ENCODE measurements at regions of chrX and their contacts with region 1.

Region 1: GRCh38 chrX:119516157-119516702 is 48.0 kb downstream of the SLC25A5 start:
- DNase-seq: peak; percentile 45
- H3K4me3 Mint-ChIP-seq: no peak overlapping the region
- H3K27ac Mint-ChIP-seq: no peak overlapping the region
- H3K4me1 Mint-ChIP-seq: no peaks in the 10 kb centered on the region
- H3K27me3 Mint-ChIP-seq: no peaks in the 10 kb centered on the region

Region 2: GRCh38 chrX:119488749-119489148 is 27.5 kb before region 1 on chrX:
- CTCF ChIA-PET with region 1: interaction called, 7 read pairs
- intact Hi-C with region 1: loop called (anchors 1 kb)
- DNase-seq: peak; percentile 60
- H3K4me3 Mint-ChIP-seq: no peak overlapping the region
- H3K27ac Mint-ChIP-seq: no peak overlapping the region
- H3K4me1 Mint-ChIP-seq: no peaks in the 10 kb centered on the region
- H3K27me3 Mint-ChIP-seq: no peaks in the 10 kb centered on the region

Region 3: DNA sequence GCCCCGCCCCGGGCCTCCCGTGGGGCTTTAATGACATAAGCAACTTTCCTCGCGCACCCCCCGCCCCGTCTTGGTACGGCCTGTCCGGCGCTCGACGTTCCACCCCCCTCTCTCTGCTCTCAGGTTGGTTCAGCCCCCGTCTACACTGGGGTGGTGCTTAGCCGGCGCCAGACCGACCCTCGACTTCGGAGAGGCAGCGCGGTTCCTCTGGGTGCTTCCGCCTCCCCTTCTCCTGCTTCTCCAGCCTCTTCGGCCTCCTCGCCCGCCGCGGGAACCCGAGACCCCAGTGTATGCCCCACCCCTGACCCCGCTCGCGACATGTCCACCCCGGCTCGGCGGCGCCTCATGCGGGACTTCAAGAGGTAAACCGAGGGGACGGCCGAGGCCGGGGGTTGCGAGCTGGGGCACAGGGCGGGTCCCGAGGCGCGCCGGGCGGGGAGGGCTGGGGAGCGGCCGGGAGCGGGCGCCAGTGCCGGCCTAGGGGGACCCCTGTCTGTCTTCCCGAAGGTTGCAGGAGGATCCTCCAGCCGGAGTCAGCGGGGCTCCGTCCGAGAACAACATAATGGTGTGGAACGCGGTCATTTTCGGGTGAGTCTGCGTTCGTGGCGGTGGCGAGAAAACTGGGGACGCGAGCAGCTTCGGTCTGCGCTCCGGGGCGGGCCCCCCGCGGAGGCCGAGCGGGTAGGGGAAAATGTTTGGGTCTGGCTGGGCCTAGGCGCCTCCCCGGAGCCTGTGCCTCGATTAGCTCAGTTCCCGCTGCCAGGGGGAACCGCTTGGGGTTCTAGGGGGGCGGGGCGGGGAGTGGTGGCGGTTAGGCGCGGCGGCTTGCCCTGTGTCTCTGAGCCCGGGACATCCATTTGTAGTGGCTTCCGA is 58.4 kb after region 1 on chrX and contains the start of gene UBE2A:
- CTCF ChIA-PET with region 1: no interaction called
- intact Hi-C with region 1: loop called (anchors 2 kb)
- DNase-seq: peak; percentile 89
- H3K4me3 Mint-ChIP-seq: peak within 1 kb of the TSS; percentile 91
- H3K27ac Mint-ChIP-seq: peak within 1 kb of the TSS; percentile 89
- H3K4me1 Mint-ChIP-seq: peaks cover 12% of the 10 kb centered on the region
- H3K27me3 Mint-ChIP-seq: no peaks in the 10 kb centered on the region
- total RNA-seq, gene UBE2A: 46.1 to 49.8 TPM

Region 4: DNA sequence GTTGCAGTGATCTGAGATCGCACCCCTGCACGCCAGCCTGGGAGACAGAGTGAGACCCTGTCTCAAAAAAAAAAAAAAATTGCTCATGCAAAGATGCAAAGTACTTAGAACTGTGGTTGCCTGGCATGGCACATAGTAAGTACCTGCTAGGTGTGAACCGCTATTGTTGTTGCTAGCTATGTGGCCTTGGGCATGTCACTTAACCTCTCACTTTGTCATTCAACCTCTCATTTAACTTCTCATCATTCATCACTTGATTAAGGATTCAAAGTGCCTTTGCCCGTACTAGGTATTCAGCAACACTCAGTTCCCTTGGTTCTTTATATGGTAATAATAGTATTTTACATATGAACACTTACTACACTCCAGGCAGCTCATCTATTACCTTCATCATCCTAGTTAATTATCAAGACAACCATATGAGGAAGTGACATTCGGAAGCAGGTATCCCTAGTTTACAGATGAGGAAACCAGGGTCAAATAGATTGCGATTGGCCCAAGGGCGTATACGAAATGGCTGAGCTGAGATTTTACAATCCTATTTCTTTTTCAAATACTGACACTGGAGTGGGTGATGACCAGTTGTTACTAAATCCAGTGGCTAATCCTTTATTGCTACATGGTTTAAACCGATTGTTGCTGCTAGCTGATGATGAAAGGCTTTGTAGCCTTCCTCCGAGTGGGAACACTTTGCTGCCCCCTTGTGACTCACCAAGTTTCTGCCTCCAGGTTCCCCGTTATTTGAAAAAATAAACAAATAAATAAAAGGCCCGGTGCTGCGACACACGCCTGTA is 213.4 kb after region 1 on chrX:
- CTCF ChIA-PET with region 1: interaction called, 37 read pairs
- intact Hi-C with region 1: loop called (anchors 1 kb)
- DNase-seq: peak; percentile 81
- H3K4me3 Mint-ChIP-seq: no peak overlapping the region
- H3K27ac Mint-ChIP-seq: no peak overlapping the region
- H3K4me1 Mint-ChIP-seq: peaks cover 6% of the 10 kb centered on the region
- H3K27me3 Mint-ChIP-seq: no peaks in the 10 kb centered on the region

Region 5: DNA sequence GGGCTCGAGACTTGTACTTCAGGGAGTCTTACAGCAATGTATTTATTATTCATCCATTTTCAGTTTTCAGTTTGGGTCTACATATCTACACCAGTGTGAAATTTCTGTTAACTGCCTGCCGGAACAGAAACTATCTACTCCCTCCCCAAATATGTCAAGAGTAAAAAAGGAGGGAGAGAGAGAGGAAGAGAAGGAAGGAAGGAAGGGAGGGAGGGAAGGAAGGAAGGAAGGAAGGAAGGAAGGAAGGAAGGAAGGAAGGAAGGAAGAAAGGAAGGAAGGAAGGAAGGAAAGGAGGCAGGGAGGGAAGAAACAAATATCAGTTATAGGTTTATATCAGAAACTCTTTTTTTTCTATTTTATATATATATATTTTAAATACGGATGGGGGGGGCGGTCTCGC is 262.6 kb after region 1 on chrX:
- CTCF ChIA-PET with region 1: no interaction called
- intact Hi-C with region 1: loop called (anchors 1 kb)
- DNase-seq: no peak
- H3K4me3 Mint-ChIP-seq: no peak overlapping the region
- H3K27ac Mint-ChIP-seq: no peak overlapping the region
- H3K4me1 Mint-ChIP-seq: peaks cover 6% of the 10 kb centered on the region
- H3K27me3 Mint-ChIP-seq: no peaks in the 10 kb centered on the region

Region 6: GRCh38 chrX:119880552-119881437 is 364.6 kb after region 1 on chrX:
- CTCF ChIA-PET with region 1: no interaction called
- intact Hi-C with region 1: loop called (anchors 1 kb)
- DNase-seq: peak; percentile 41
- H3K4me3 Mint-ChIP-seq: no peak overlapping the region
- H3K27ac Mint-ChIP-seq: no peak overlapping the region
- H3K4me1 Mint-ChIP-seq: peaks cover 15% of the 10 kb centered on the region
- H3K27me3 Mint-ChIP-seq: no peaks in the 10 kb centered on the region